BJ (cell line): ENCODE measurements at regions of chrX and their contacts with region 1.

Region 1: GRCh38 chrX:12974796-12975669 is at the start of gene TMSB4X:
- DNase-seq: no peak
- H3K4me3 ChIP-seq: peak within 1 kb of the TSS; percentile 87
- H3K27me3 ChIP-seq: no peaks in the 10 kb centered on the region
- CTCF ChIP-seq: no peak
- polyA plus RNA-seq, gene TMSB4X: 2,469 and 4,277 TPM in 2 replicates

Region 2: GRCh38 chrX:12567857-12568256 is 407.2 kb before region 1 on chrX:
- CTCF ChIA-PET with region 1: no interaction called
- POLR2A ChIA-PET with region 1: no interaction called
- DNase-seq: no peak
- H3K4me3 ChIP-seq: no peak overlapping the region
- H3K27me3 ChIP-seq: no peaks in the 10 kb centered on the region
- CTCF ChIP-seq: peak; percentile 66

Region 3: GRCh38 chrX:12901486-12901885 is 73.5 kb before region 1 on chrX:
- CTCF ChIA-PET with region 1: no interaction called
- POLR2A ChIA-PET with region 1: interaction called, 10 read pairs
- DNase-seq: no peak
- H3K4me3 ChIP-seq: no peak overlapping the region
- H3K27me3 ChIP-seq: no peaks in the 10 kb centered on the region
- CTCF ChIP-seq: peak; percentile 63

Region 4: GRCh38 chrX:12946838-12947544 is 28.0 kb before region 1 on chrX:
- CTCF ChIA-PET with region 1: interaction called, 11 read pairs
- POLR2A ChIA-PET with region 1: interaction called, 3 read pairs
- DNase-seq: no peak
- H3K4me3 ChIP-seq: no peak overlapping the region
- H3K27me3 ChIP-seq: no peaks in the 10 kb centered on the region
- CTCF ChIP-seq: peak; percentile 81

Region 5: DNA sequence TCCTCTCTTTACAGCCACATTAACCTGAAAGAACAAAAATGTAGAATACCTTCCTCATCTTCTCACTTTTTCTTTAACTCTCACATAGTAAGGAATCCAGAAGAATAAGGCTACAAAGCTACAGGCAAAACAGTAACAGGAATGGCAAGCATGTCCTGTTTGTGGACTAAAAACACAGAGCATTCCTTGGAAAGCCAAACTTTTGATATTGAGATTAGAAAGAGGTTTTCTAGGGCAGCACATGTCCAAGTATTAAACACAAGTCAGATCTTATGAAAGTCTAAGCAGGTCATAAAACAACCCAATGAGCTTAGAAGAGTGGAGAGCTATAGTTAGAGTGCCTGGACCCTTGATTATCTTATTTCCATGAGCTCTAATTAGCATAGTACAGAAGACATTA is 127.6 kb after region 1 on chrX:
- CTCF ChIA-PET with region 1: no interaction called
- POLR2A ChIA-PET with region 1: interaction called, 10 read pairs
- DNase-seq: no peak
- H3K4me3 ChIP-seq: no peak overlapping the region
- H3K27me3 ChIP-seq: no peaks in the 10 kb centered on the region
- CTCF ChIP-seq: no peak

Region 6: DNA sequence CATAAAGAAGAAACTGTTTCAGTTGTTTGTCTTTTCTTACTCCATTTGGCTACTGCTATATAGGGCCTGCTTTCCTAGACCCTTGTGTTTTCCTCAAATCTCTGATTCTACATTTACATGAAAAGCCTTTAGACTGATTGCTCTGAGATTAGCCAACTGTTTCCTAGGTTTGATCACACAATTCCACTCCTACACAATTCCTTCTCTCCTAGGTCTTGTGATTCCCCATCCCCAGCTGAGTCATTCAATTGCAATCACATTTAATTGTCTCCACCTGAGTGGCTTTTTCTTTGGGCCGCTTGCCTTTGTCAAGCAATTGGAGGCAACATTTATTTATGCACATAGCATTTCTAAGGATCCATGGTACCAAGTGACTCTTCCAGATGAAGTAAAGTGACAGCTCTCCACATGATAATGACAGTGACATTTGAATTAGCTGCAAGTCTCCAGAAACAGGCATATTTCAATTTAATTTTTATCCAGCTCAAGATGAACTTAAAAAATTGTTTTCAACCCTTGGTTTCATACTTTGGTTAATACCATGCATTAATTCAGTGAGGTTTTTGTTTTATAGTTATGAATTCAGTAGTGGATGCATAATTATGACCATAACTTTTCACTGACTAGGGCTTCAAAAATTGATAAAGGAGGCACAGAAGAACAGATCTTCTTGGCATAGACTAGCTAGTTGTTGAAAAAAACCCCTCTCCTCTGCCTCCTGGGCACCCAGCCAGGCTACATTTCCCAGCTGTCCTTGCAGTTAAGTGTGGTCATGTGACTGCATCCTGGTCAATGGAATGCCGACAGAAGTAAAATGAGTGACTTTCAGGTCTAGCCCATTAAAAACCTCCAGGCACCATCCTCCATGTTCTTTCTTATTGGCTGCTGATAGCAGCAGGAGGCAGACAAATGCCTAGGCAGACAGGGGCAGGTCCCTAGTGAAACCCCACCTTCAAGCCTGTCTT is 309.2 kb after region 1 on chrX:
- CTCF ChIA-PET with region 1: no interaction called
- POLR2A ChIA-PET with region 1: interaction called, 12 read pairs
- DNase-seq: peak; percentile 55
- H3K4me3 ChIP-seq: no peak overlapping the region
- H3K27me3 ChIP-seq: no peaks in the 10 kb centered on the region
- CTCF ChIP-seq: no peak

Region 7: GRCh38 chrX:13487731-13488523 is 512.9 kb after region 1 on chrX:
- CTCF ChIA-PET with region 1: interaction called, 13 read pairs
- POLR2A ChIA-PET with region 1: interaction called, 9 read pairs
- DNase-seq: peak; percentile 70
- H3K4me3 ChIP-seq: no peak overlapping the region
- H3K27me3 ChIP-seq: no peaks in the 10 kb centered on the region
- CTCF ChIP-seq: peak; percentile 37

Region 8: GRCh38 chrX:13511944-13512330 is 536.9 kb after region 1 on chrX:
- CTCF ChIA-PET with region 1: no interaction called
- POLR2A ChIA-PET with region 1: interaction called, 20 read pairs
- DNase-seq: no peak
- H3K4me3 ChIP-seq: no peak overlapping the region
- H3K27me3 ChIP-seq: no peaks in the 10 kb centered on the region
- CTCF ChIP-seq: no peak